Caco-2 (cell line): ENCODE measurements at regions of chr15 and their contacts with region 1.

Region 1: GRCh38 chr15:52139599-52140491 is 27.3 kb upstream of the BCL2L10 start:
- DNase-seq: peak; percentile 62 to 72
- H3K4me3 ChIP-seq: no peak overlapping the region
- H3K4me3 Mint-ChIP-seq: no peak overlapping the region
- H3K27ac Mint-ChIP-seq: no peak overlapping the region
- H3K4me1 ChIP-seq: peaks cover 8% of the 10 kb centered on the region
- H3K4me1 Mint-ChIP-seq: peaks cover 9% of the 10 kb centered on the region
- H3K27me3 ChIP-seq: no peaks in the 10 kb centered on the region
- H3K27me3 Mint-ChIP-seq: no peaks in the 10 kb centered on the region
- CTCF ChIP-seq: peak; percentile 77 to 86

Region 2: DNA sequence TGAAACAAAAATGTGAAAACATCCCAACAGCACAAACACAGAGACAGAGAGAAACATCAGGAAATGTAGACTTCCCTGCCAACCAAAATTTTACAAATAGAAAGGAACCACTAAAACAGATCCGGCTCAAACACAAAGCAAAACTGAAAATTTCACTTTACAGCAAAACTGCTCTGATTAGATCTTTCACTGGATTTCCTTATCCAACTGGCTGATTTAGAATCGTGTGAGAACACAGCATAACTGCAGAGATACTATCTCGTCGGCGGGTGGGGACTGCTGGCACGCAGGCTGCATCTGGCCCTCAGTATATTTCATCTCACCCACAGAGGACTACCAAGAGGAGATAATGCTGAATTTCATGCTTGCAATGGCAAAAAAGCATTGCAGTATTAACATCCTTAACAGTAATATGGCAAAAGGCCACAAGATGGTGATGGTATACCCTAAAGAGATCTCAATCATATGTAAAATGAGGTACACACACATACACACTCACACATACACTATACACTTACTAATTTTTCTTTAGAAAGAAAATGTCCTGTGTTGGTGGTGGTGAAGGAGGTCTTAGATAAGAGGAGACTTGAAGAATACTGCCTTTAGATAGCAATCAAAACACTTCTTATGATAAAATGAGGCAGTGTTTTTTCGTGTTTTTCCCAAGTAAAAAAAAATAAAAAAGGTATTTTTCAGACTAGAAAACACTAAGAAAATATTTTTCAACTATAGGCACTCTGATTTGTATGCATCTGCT is 157.7 kb before region 1 on chr15:
- CTCF ChIA-PET with region 1: no interaction called
- POLR2A ChIA-PET with region 1: no interaction called
- intact Hi-C with region 1: loop called (anchors 1 kb)
- DNase-seq: peak in 1 of 2 experiments; percentile 47
- H3K4me3 ChIP-seq: no peak overlapping the region
- H3K4me3 Mint-ChIP-seq: peak overlapping the region; percentile 27
- H3K27ac Mint-ChIP-seq: peak overlapping the region; percentile 42
- H3K4me1 ChIP-seq: no peaks in the 10 kb centered on the region
- H3K4me1 Mint-ChIP-seq: peaks cover 8% of the 10 kb centered on the region
- H3K27me3 ChIP-seq: no peaks in the 10 kb centered on the region
- H3K27me3 Mint-ChIP-seq: no peaks in the 10 kb centered on the region
- CTCF ChIP-seq: peak; percentile 39 to 51

Region 3: GRCh38 chr15:52107238-52107637 is 32.6 kb before region 1 on chr15:
- CTCF ChIA-PET with region 1: no interaction called
- POLR2A ChIA-PET with region 1: interaction called, 13 read pairs
- intact Hi-C with region 1: no loop called
- DNase-seq: no peak
- H3K4me3 ChIP-seq: no peak overlapping the region
- H3K4me3 Mint-ChIP-seq: no peak overlapping the region
- H3K27ac Mint-ChIP-seq: no peak overlapping the region
- H3K4me1 ChIP-seq: peaks cover 8% of the 10 kb centered on the region; the same call in 1 of the 2 replicates
- H3K4me1 Mint-ChIP-seq: no peaks in the 10 kb centered on the region
- H3K27me3 ChIP-seq: no peaks in the 10 kb centered on the region
- H3K27me3 Mint-ChIP-seq: no peaks in the 10 kb centered on the region
- CTCF ChIP-seq: no peak